T-cell (primary cell): ENCODE measurements at regions of chrX and their contacts with region 1.

Region 1: GRCh38 chrX:119729408-119730201 is 28.8 kb upstream of the SOWAHD start:
- DNase-seq: peak; percentile 36 to 80 (median 60)
- ATAC-seq: peak in 2 of 4 experiments; percentile 52 to 64
- H3K4me3 ChIP-seq: no peak overlapping the region
- H3K4me3 Mint-ChIP-seq: no peak overlapping the region
- H3K27ac ChIP-seq: no peak overlapping the region
- H3K27ac Mint-ChIP-seq: no peak overlapping the region
- H3K4me1 ChIP-seq: peaks cover 6 to 8% of the 10 kb centered on the region in 2 experiments
- H3K4me1 Mint-ChIP-seq: peaks cover 7 to 11% (median 7%) of the 10 kb centered on the region in 3 donors
- H3K27me3 ChIP-seq: no peaks in the 10 kb centered on the region
- H3K27me3 Mint-ChIP-seq: peaks cover 0 to 14% of the 10 kb centered on the region in 2 donors

Region 2: GRCh38 chrX:119516157-119516702 is 213.4 kb before region 1 on chrX:
- CTCF ChIA-PET with region 1: interaction called, 11 to 12 read pairs
- POLR2A ChIA-PET with region 1: interaction called in 1 of 2 experiments, 10 read pairs
- DNase-seq: peak in 29 of 35 experiments; percentile 2 to 76 (median 18)
- ATAC-seq: peak; percentile 88 to 95 (median 92)
- H3K4me3 ChIP-seq: no peak overlapping the region
- H3K4me3 Mint-ChIP-seq: no peak overlapping the region
- H3K27ac ChIP-seq: no peak overlapping the region
- H3K27ac Mint-ChIP-seq: peak overlapping the region in 1 of 2 donors; percentile 24
- H3K4me1 ChIP-seq: no peaks in the 10 kb centered on the region
- H3K4me1 Mint-ChIP-seq: peaks cover 0 to 8% (median 4%) of the 10 kb centered on the region in 3 donors
- H3K27me3 ChIP-seq: peaks cover 0 to 2% of the 10 kb centered on the region in 2 experiments
- H3K27me3 Mint-ChIP-seq: no peaks in the 10 kb centered on the region

Region 3: DNA sequence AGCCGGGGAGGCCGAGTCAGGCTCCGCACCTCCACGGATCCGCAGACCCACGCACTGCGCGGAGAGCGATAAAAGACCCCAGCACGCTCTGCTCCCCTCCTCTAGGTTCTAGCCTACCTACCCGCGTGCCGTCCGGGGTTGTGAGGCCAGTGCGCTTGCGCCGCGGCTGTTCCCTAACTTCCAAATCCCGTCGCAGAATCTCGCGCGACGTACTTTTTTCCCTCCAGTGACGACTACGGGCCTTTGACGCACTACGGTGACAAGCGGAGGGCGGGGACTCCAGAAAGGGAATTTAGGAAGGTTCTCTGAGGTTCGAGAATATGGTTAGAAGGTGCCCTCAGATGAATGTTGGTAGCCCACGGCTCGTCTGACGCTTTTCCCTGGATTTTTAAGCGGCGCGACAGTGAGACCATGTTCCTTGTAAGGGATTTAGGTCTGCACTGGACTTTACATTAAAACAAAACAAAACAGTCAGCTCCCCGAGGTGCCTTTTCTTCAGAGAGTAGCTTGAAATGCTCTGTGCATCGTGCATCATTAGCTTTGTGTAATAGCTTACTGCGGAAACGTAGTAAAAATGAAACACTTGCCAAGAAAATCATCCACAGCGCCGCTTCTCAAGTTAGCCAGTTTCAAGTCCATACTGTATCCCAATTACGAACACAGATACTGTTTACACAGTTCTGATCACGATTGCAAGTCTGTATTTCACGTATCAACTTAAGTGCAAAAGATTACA is 123.2 kb before region 1 on chrX and contains the start of gene NKRF:
- CTCF ChIA-PET with region 1: interaction called, 4 to 11 read pairs
- POLR2A ChIA-PET with region 1: interaction called in 1 of 2 experiments, 9 read pairs
- DNase-seq: peak; percentile 78 to 95 (median 87)
- ATAC-seq: peak; percentile 81 to 84 (median 82)
- H3K4me3 ChIP-seq: peak within 1 kb of the TSS; percentile 72 to 92
- H3K4me3 Mint-ChIP-seq: peak within 1 kb of the TSS; percentile 89 to 93 (median 89)
- H3K27ac ChIP-seq: peak within 1 kb of the TSS; percentile 97
- H3K27ac Mint-ChIP-seq: peak within 1 kb of the TSS; percentile 94
- H3K4me1 ChIP-seq: peaks cover 3 to 19% of the 10 kb centered on the region in 2 experiments
- H3K4me1 Mint-ChIP-seq: peaks cover 36 to 47% (median 36%) of the 10 kb centered on the region in 3 donors
- H3K27me3 ChIP-seq: no peaks in the 10 kb centered on the region
- H3K27me3 Mint-ChIP-seq: no peaks in the 10 kb centered on the region
- total RNA-seq, gene NKRF: 13.0 to 14.2 (median 13.7) TPM

Region 4: GRCh38 chrX:119638725-119639471 is 90.7 kb before region 1 on chrX:
- CTCF ChIA-PET with region 1: interaction called in 1 of 2 experiments, 12 read pairs
- POLR2A ChIA-PET with region 1: no interaction called
- DNase-seq: no peak
- ATAC-seq: peak in 2 of 4 experiments; percentile 11 to 23
- H3K4me3 ChIP-seq: no peak overlapping the region
- H3K4me3 Mint-ChIP-seq: no peak overlapping the region
- H3K27ac ChIP-seq: no peak overlapping the region
- H3K27ac Mint-ChIP-seq: peak overlapping the region; percentile 43 to 50
- H3K4me1 ChIP-seq: peaks cover 0 to 4% of the 10 kb centered on the region in 2 experiments
- H3K4me1 Mint-ChIP-seq: peaks cover 22 to 40% (median 32%) of the 10 kb centered on the region in 3 donors
- H3K27me3 ChIP-seq: no peaks in the 10 kb centered on the region
- H3K27me3 Mint-ChIP-seq: no peaks in the 10 kb centered on the region

Region 5: GRCh38 chrX:119685225-119686066 is 44.2 kb before region 1 on chrX:
- CTCF ChIA-PET with region 1: interaction called in 1 of 2 experiments, 4 read pairs
- POLR2A ChIA-PET with region 1: interaction called in 1 of 2 experiments, 10 read pairs
- DNase-seq: peak in 9 of 35 experiments; percentile 23 to 71 (median 39)
- ATAC-seq: peak in 3 of 4 experiments; percentile 10 to 46 (median 11)
- H3K4me3 ChIP-seq: peak overlapping the region; percentile 34 to 38
- H3K4me3 Mint-ChIP-seq: peak overlapping the region; percentile 93 to 96 (median 94)
- H3K27ac ChIP-seq: peak overlapping the region; percentile 99
- H3K27ac Mint-ChIP-seq: peak overlapping the region; percentile 94 to 98
- H3K4me1 ChIP-seq: peaks cover 71 to 88% of the 10 kb centered on the region in 2 experiments
- H3K4me1 Mint-ChIP-seq: peaks cover 77 to 94% (median 86%) of the 10 kb centered on the region in 3 donors
- H3K27me3 ChIP-seq: no peaks in the 10 kb centered on the region
- H3K27me3 Mint-ChIP-seq: no peaks in the 10 kb centered on the region